ENCODE measurements at regions of chrX and their contacts with region 1.

Region 1: GRCh38 chrX:47233337-47234113 is 716 bp downstream of the USP11 start:
- DNase-seq: peak; percentile 96
- ATAC-seq: peak; percentile 94
- H3K4me3 Mint-ChIP-seq: peak overlapping the region; percentile 89
- H3K27ac Mint-ChIP-seq: peak overlapping the region; percentile 97
- H3K4me1 Mint-ChIP-seq: peaks cover 26% of the 10 kb centered on the region
- H3K27me3 Mint-ChIP-seq: no peaks in the 10 kb centered on the region
- CTCF ChIP-seq: no peak

Region 2: GRCh38 chrX:47217642-47218279 is 15.8 kb before region 1 on chrX:
- CTCF ChIA-PET with region 1: interaction called, 3 read pairs
- POLR2A ChIA-PET with region 1: interaction called, 42 read pairs
- intact Hi-C with region 1: no loop called
- DNase-seq: peak; percentile 98
- ATAC-seq: peak; percentile 87
- H3K4me3 Mint-ChIP-seq: peak overlapping the region; percentile 88
- H3K27ac Mint-ChIP-seq: peak overlapping the region; percentile 99
- H3K4me1 Mint-ChIP-seq: peaks cover 43% of the 10 kb centered on the region
- H3K27me3 Mint-ChIP-seq: no peaks in the 10 kb centered on the region
- CTCF ChIP-seq: no peak